ENCODE measurements at regions of chr19 and their contacts with region 1.

Region 1: GRCh38 chr19:47124937-47125668 is 5.5 kb upstream of the SAE1 start:
- DNase-seq: no peak
- H3K4me3 ChIP-seq: no peak overlapping the region
- H3K27ac ChIP-seq: peak overlapping the region; percentile 7 to 41 (median 35)
- H3K4me1 ChIP-seq: peaks cover 0 to 17% (median 10%) of the 10 kb centered on the region in 4 donors
- H3K27me3 ChIP-seq: no peaks in the 10 kb centered on the region
- CTCF ChIP-seq: peak; percentile 70 to 88 (median 78)
- EP300 ChIP-seq: no peak
- POLR2A ChIP-seq: no peak

Region 2: GRCh38 chr19:46863818-46864611 is 261.1 kb before region 1 on chr19:
- intact Hi-C with region 1: no loop called
- DNase-seq: peak; percentile 60
- H3K4me3 ChIP-seq: peak overlapping the region in 3 of 4 donors; percentile 2 to 9 (median 7)
- H3K27ac ChIP-seq: peak overlapping the region; percentile 95 to 99 (median 97)
- H3K4me1 ChIP-seq: peaks cover 0 to 77% (median 66%) of the 10 kb centered on the region in 4 donors
- H3K27me3 ChIP-seq: no peaks in the 10 kb centered on the region
- CTCF ChIP-seq: no peak
- EP300 ChIP-seq: no peak
- POLR2A ChIP-seq: no peak

Region 3: DNA sequence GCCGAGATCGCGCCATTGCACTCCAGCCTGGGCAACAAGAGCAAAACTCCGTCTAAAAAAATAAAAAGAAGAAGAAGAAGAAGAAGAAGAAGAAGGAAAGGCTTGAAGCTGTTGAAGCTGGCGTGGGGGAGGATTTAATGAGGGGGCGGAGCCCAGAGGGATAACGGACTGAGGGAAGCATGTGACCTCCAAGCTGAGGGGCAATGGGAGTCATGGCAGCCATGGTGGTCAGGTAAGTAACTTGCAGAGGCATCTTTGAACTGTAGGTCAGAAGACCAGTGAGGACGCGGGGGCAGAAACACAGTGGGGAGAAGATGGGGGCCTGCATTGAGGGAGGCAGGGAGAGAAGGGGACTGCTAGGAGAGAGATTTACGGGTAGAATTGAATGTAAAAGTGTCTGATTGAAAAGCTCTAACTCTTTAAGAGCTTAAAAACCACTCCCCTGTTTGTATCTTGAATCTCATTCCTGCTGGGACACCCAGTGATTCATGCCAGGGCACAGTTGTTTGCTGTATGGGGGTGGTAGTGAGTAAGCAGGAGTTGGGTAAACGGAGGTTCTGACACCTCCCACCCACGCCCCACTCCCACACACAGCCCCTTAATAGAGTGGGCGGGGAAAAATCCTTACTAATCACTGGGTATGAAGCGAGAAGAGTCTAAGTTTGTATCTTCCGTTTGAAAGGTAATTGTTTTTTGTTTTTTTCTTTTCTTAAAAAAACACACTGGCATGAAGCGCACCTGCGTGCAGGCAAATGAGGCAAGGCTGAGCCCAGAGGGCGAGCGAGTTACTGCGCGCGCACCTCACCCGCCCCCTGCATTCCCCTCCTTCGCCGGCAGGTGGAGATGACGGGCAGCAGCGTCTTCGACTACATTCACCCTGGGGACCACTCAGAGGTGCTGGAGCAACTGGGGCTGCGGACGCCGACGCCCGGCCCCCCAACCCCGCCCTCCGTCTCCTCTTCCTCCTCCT is 89.7 kb before region 1 on chr19:
- intact Hi-C with region 1: loop called (anchors 5 kb)
- DNase-seq: peak; percentile 90
- H3K4me3 ChIP-seq: peak overlapping the region; percentile 21 to 51 (median 46)
- H3K27ac ChIP-seq: peak overlapping the region; percentile 47 to 73 (median 62)
- H3K4me1 ChIP-seq: peaks cover 0 to 15% (median 9%) of the 10 kb centered on the region in 4 donors
- H3K27me3 ChIP-seq: peaks cover 0 to 31% (median 19%) of the 10 kb centered on the region in 3 donors
- CTCF ChIP-seq: peak; percentile 81 to 100 (median 94)
- EP300 ChIP-seq: no peak
- POLR2A ChIP-seq: no peak

Region 4: GRCh38 chr19:47075179-47075810 is 49.8 kb before region 1 on chr19:
- intact Hi-C with region 1: loop called (anchors 1 kb)
- DNase-seq: no peak
- H3K4me3 ChIP-seq: no peak overlapping the region
- H3K27ac ChIP-seq: no peak overlapping the region
- H3K4me1 ChIP-seq: peaks cover 0 to 6% (median 4%) of the 10 kb centered on the region in 4 donors
- H3K27me3 ChIP-seq: no peaks in the 10 kb centered on the region
- CTCF ChIP-seq: no peak
- EP300 ChIP-seq: no peak
- POLR2A ChIP-seq: no peak